GM12878 (cell line): ENCODE measurements at regions of chr11 and their contacts with region 1.

Region 1: DNA sequence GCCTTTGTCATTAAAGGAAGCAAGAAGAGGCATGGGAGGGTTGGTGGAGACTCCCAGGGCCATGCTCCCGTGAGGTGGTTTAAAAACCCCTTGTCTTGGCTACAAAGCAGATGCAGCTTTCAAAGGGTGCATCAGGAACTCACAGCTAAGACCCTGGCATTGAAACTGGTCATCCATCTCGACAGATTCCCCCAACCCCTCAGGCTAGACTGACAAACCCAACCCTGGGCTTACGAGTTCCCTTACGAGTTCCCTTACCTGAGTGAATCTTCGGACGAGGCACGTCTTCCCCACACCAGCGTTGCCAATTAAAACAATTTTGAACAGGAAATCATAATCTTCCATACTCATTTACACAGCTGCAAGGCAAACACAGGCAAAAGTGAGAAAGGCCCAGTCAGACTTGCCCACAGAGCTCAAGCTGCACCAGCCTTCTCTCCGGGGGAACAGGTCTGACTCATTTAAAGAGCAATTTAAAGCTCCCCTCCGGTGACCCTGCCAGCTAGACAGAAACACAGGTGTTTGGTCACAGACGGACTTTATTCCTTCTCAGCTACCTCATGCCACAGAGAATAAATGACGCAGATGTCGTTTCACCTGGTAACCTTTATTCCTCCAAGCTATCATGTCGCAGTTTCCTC is 74.6 kb downstream of the RAB30 start:
- DNase-seq: peak; percentile 87
- ATAC-seq: peak; percentile 90
- H3K4me3 ChIP-seq: peak overlapping the region; percentile 15; the same call in 1 of the 2 replicates
- H3K27ac ChIP-seq: peak overlapping the region; percentile 67
- H3K4me1 ChIP-seq: peaks cover 46% of the 10 kb centered on the region
- H3K27me3 ChIP-seq: no peaks in the 10 kb centered on the region
- CTCF ChIP-seq: no peak
- EP300 ChIP-seq: peak; percentile 89 to 94; a peak in 3 of 4 replicates
- POLR2A ChIP-seq: no peak
- RAD21 ChIP-seq: 0 out of 2 replicates have a peak, but pooled peaks have one; percentile 0

Region 2: DNA sequence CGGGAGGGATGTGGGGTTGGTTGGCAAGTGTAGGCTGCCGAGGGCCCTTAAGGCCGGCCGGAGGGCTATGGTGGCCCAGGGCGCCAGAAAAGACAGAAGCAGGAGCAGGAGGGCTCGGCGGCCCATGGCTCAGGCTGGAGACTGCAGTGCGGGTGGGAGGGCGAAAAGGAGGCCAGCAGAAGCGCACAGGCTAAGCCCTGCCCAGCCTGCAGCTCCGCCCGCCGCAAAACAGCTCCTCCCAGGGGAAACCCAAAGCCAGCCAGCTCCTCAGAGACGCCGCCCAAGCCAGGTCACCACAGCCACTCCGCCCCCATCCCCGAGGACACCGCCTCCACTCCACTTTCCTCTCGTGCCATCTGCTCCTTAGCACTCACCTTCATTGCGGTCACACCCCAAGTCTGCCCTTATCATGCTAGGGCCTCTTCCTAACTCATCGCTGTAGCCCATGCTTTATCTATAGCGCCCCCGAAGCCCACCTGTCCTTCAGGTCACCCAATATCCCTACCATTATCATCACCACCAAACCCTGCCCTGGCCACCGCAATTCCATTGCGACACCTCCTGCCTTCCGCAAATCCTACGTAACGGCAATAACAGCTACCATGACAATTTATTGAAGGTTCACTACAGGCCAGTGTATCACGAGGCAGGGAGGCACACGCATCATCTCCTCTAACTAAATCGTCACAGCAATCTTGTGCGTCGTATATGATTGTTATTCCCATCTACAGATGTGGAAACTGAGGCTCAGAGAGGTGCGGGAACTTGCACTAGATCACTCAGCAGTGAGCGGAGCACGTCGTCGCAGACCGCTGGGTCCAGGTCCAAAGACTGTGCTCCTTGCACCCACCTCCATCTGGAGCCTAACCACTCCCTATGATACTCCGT is 96.6 kb before region 1 on chr11 and contains the start of gene PRCP:
- CTCF ChIA-PET with region 1: interaction called, 6 read pairs
- POLR2A ChIA-PET with region 1: interaction called, 4 read pairs
- RAD21 ChIA-PET with region 1: interaction called, 22 read pairs
- SMC1A ChIA-PET with region 1: interaction called, 11 read pairs
- in situ Hi-C with region 1: no loop called
- intact Hi-C with region 1: no loop called
- DNase-seq: peak; percentile 84
- ATAC-seq: peak; percentile 88
- H3K4me3 ChIP-seq: peak within 1 kb of the TSS; percentile 82
- H3K27ac ChIP-seq: peak within 1 kb of the TSS; percentile 84
- H3K4me1 ChIP-seq: peaks cover 15% of the 10 kb centered on the region
- H3K27me3 ChIP-seq: no peaks in the 10 kb centered on the region
- CTCF ChIP-seq: no peak
- EP300 ChIP-seq: 0 out of 4 replicates have a peak, but pooled peaks of 1 of the 2 experiments have one; percentile 12
- POLR2A ChIP-seq: peak; percentile 84
- RAD21 ChIP-seq: no peak
- polyA plus RNA-seq, gene PRCP: 21.5 to 25.3 TPM

Region 3: DNA sequence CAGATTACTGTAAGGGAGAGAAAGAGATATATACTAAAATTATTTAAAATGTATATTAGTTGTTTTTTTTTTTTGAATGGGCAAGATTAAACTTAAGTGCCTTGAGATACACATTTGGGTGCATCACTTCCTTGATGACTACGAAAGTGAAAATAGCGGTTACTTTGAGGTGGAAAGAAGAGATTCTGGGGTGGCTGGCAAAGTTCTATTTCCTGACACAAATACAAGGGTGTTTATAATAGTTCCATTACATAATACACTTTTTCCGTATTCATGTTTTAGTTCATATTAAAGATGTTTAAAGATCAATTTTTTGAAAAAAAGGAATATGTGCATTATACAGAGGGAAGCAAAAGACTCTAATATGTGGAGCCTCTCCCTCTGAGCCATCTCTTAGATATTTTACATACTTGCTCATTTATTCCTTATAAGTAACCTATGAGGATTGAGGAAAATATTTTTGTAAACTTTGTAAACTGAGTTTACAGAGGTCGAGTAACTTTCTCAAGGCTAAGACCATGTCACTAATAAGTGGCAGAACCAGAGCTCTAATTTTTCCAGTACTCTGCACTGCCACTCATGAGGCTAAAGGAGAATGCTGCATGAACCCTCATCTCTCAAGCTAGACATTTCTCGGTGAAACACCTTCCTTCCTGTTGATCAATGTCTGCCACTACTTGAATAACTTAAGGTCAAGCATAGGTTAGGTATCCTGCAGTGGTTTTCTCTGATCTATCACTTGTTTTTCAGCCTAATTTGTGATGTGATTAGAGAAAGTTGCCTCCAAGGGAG is 36.9 kb before region 1 on chr11:
- CTCF ChIA-PET with region 1: interaction called, 4 read pairs
- POLR2A ChIA-PET with region 1: interaction called, 5 read pairs
- RAD21 ChIA-PET with region 1: interaction called, 16 read pairs
- SMC1A ChIA-PET with region 1: interaction called, 7 read pairs
- in situ Hi-C with region 1: no loop called
- intact Hi-C with region 1: no loop called
- DNase-seq: peak; percentile 65
- ATAC-seq: peak; percentile 93
- H3K4me3 ChIP-seq: peak overlapping the region; percentile 3; the same call in 1 of the 2 replicates
- H3K27ac ChIP-seq: peak overlapping the region; percentile 72
- H3K4me1 ChIP-seq: peaks cover 17% of the 10 kb centered on the region
- H3K27me3 ChIP-seq: no peaks in the 10 kb centered on the region
- CTCF ChIP-seq: no peak
- EP300 ChIP-seq: peak in 1 of 2 experiments; percentile 87; a peak in 2 of 4 replicates
- POLR2A ChIP-seq: no peak
- RAD21 ChIP-seq: no peak

Region 4: DNA sequence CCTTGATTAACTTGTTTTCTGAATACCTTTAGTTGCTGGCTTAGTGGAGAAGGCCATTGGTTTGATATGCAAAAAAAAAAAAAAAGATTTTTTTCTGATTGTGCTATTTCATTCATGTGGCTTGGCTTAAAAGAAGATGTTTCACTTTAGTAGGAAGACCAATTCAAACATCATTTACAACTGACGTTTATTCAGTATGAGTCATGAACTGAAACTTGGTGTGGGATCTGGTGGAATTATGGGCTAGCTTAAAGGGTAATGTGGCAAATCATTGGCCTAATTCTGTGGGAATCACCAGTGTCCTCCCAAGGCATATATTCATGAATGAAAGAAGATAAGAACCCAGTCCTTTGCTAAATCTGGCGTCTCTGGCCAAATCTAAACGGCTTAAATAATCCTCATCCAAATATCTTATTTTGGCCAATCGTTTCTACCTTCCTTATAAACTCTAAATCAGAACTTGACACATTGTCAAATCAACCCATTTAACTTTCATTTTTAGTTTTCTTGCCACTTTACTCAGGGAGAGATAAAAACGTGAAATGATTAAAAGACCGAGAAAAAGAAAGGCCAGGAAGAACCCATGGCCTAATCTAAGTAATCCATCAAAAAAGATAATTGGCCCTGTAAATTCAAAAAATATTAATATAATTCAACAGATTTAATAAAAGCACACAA is 18.5 kb before region 1 on chr11:
- CTCF ChIA-PET with region 1: interaction called, 4 read pairs
- POLR2A ChIA-PET with region 1: interaction called, 5 read pairs
- RAD21 ChIA-PET with region 1: interaction called, 6 read pairs
- SMC1A ChIA-PET with region 1: interaction called, 34 read pairs
- in situ Hi-C with region 1: no loop called
- intact Hi-C with region 1: no loop called
- DNase-seq: peak; percentile 56
- ATAC-seq: peak; percentile 78
- H3K4me3 ChIP-seq: 0 out of 2 replicates have a peak overlapping the region, but pooled peaks have one; percentile 21
- H3K27ac ChIP-seq: peak overlapping the region; percentile 58
- H3K4me1 ChIP-seq: peaks cover 15% of the 10 kb centered on the region
- H3K27me3 ChIP-seq: no peaks in the 10 kb centered on the region
- CTCF ChIP-seq: no peak
- EP300 ChIP-seq: peak; percentile 80 to 84; a peak in 3 of 4 replicates
- POLR2A ChIP-seq: no peak
- RAD21 ChIP-seq: 0 out of 2 replicates have a peak, but pooled peaks have one; percentile 7

Region 5: GRCh38 chr11:83033972-83034672 is 37.0 kb after region 1 on chr11:
- CTCF ChIA-PET with region 1: interaction called, 3 read pairs
- POLR2A ChIA-PET with region 1: interaction called, 5 read pairs
- RAD21 ChIA-PET with region 1: interaction called, 9 read pairs
- SMC1A ChIA-PET with region 1: interaction called, 17 read pairs
- in situ Hi-C with region 1: no loop called
- intact Hi-C with region 1: no loop called
- DNase-seq: no peak
- ATAC-seq: peak; percentile 50
- H3K4me3 ChIP-seq: 0 out of 2 replicates have a peak overlapping the region, but pooled peaks have one; percentile 10
- H3K27ac ChIP-seq: no peak overlapping the region
- H3K4me1 ChIP-seq: peaks cover 21% of the 10 kb centered on the region
- H3K27me3 ChIP-seq: no peaks in the 10 kb centered on the region
- CTCF ChIP-seq: no peak
- EP300 ChIP-seq: no peak
- POLR2A ChIP-seq: no peak
- RAD21 ChIP-seq: no peak

Region 6: GRCh38 chr11:83063073-83063754 is 66.1 kb after region 1 on chr11:
- CTCF ChIA-PET with region 1: interaction called, 21 read pairs
- POLR2A ChIA-PET with region 1: interaction called, 142 read pairs
- RAD21 ChIA-PET with region 1: interaction called, 96 read pairs
- SMC1A ChIA-PET with region 1: interaction called, 138 read pairs
- in situ Hi-C with region 1: no loop called
- intact Hi-C with region 1: loop called (anchors 1 kb)
- DNase-seq: peak; percentile 88
- ATAC-seq: peak; percentile 77
- H3K4me3 ChIP-seq: peak overlapping the region; percentile 66
- H3K27ac ChIP-seq: peak overlapping the region; percentile 96
- H3K4me1 ChIP-seq: peaks cover 43% of the 10 kb centered on the region
- H3K27me3 ChIP-seq: no peaks in the 10 kb centered on the region
- CTCF ChIP-seq: no peak
- EP300 ChIP-seq: peak; percentile 96 to 98
- POLR2A ChIP-seq: no peak
- RAD21 ChIP-seq: no peak

Region 7: DNA sequence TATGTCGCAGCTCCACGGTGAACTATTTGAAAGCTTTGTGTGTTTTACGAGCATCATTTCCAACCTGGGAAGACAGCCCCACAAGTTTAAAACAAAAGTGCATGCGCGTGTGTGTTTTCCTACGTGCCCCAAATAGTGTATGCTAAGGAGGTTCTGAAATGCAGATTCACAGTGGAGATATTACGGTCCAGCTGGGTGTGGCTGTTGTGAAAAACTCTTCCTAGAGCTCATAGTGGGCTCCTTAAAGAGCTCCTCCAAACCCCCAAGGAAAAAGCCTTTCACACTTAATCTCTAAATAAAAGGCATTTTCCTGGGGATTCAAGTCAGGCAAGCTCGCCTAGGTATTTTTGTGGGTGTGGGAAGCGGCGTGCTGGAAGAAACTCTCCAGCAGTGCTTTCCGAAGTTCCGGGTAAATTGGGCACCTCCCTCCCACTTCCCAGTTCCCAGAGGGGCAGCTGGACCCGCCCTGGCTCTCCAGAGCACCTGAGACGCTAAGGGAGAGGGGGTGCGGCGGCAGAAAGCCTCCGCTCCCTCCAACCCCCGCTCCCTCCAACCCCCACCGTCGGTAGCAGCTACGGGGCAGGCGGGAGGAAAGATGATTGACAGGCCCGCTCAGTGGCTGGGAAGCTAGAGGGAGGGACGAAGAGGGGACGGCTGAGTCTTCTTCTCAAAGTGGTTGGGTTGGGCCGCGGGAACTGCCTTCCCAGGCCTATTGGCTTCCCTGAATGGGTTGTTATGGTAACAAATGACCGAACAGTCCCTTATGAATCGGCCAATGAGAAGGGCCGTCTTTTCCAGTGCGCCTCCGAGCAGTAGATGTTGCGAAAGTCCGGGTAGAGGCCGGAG is 159.3 kb after region 1 on chr11:
- CTCF ChIA-PET with region 1: interaction called, 4 read pairs
- POLR2A ChIA-PET with region 1: interaction called, 5 read pairs
- RAD21 ChIA-PET with region 1: interaction called, 14 read pairs
- SMC1A ChIA-PET with region 1: interaction called, 16 read pairs
- in situ Hi-C with region 1: no loop called
- intact Hi-C with region 1: loop called (anchors 2 kb)
- DNase-seq: peak; percentile 100
- ATAC-seq: peak; percentile 89
- H3K4me3 ChIP-seq: peak overlapping the region; percentile 80
- H3K27ac ChIP-seq: peak overlapping the region; percentile 85
- H3K4me1 ChIP-seq: peaks cover 3% of the 10 kb centered on the region; the same call in 1 of the 2 replicates
- H3K27me3 ChIP-seq: no peaks in the 10 kb centered on the region
- CTCF ChIP-seq: no peak
- EP300 ChIP-seq: no peak; a peak in 1 of 4 replicates
- POLR2A ChIP-seq: no peak
- RAD21 ChIP-seq: no peak

Region 8: GRCh38 chr11:83427501-83427900 is 430.4 kb after region 1 on chr11:
- CTCF ChIA-PET with region 1: no interaction called
- POLR2A ChIA-PET with region 1: no interaction called
- RAD21 ChIA-PET with region 1: no interaction called
- SMC1A ChIA-PET with region 1: no interaction called
- in situ Hi-C with region 1: no loop called
- intact Hi-C with region 1: no loop called
- DNase-seq: no peak
- ATAC-seq: no peak
- H3K4me3 ChIP-seq: no peak overlapping the region
- H3K27ac ChIP-seq: no peak overlapping the region
- H3K4me1 ChIP-seq: no peaks in the 10 kb centered on the region
- H3K27me3 ChIP-seq: no peaks in the 10 kb centered on the region
- CTCF ChIP-seq: no peak
- EP300 ChIP-seq: no peak
- POLR2A ChIP-seq: no peak
- RAD21 ChIP-seq: no peak